ENCODE measurements at regions of chr11 and their contacts with region 1.

Region 1: DNA sequence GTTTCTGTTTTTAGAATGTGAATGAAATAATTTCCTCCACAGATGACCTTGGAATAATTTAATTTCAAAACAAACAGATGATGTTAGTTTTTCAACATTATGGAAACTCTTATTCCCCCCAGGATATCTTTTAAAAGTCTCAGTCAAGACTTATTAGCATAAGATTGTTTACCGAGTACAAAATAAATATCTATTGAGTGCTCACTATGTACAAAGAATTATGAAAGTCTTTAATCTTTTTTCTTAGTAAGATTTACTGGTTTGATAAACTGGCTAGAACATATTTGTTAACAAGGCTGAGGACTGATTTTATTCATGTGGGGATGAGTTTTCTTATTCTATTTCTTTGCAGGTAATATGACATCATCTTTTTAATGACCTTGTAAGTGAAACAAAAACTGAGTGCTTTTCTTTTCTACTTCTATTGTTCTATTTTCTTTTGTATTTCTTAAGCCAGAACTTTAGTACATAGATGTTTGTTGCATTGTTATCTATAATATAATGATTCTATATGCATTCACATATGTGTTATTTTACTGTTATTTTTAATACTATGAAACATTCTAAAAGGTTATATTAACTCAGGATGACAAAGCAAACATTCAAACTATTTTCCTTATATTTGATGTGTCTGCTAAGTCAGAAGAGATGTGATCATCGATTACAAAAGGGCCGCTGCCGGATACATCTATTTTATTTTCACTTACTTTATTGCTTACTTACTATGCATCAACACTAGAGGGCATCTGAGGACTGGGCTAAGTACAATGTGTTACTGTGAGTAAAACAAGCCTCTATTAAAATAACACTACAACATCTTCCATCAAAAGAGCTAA is 111.0 kb upstream of the ARHGAP42 start:
- DNase-seq: peak; percentile 12
- H3K4me3 Mint-ChIP-seq: no peak overlapping the region
- H3K27ac Mint-ChIP-seq: no peak overlapping the region
- H3K4me1 Mint-ChIP-seq: no peaks in the 10 kb centered on the region
- H3K27me3 Mint-ChIP-seq: no peaks in the 10 kb centered on the region

Region 2: GRCh38 chr11:100546714-100547113 is 29.4 kb before region 1 on chr11:
- CTCF ChIA-PET with region 1: no interaction called
- intact Hi-C with region 1: no loop called
- DNase-seq: no peak
- H3K4me3 Mint-ChIP-seq: no peak overlapping the region
- H3K27ac Mint-ChIP-seq: no peak overlapping the region
- H3K4me1 Mint-ChIP-seq: no peaks in the 10 kb centered on the region
- H3K27me3 Mint-ChIP-seq: no peaks in the 10 kb centered on the region

Region 3: GRCh38 chr11:100727410-100727809 is 151.3 kb after region 1 on chr11:
- CTCF ChIA-PET with region 1: no interaction called
- intact Hi-C with region 1: no loop called
- DNase-seq: no peak
- H3K4me3 Mint-ChIP-seq: no peak overlapping the region
- H3K27ac Mint-ChIP-seq: no peak overlapping the region
- H3K4me1 Mint-ChIP-seq: no peaks in the 10 kb centered on the region
- H3K27me3 Mint-ChIP-seq: peaks cover 3% of the 10 kb centered on the region

Region 4: DNA sequence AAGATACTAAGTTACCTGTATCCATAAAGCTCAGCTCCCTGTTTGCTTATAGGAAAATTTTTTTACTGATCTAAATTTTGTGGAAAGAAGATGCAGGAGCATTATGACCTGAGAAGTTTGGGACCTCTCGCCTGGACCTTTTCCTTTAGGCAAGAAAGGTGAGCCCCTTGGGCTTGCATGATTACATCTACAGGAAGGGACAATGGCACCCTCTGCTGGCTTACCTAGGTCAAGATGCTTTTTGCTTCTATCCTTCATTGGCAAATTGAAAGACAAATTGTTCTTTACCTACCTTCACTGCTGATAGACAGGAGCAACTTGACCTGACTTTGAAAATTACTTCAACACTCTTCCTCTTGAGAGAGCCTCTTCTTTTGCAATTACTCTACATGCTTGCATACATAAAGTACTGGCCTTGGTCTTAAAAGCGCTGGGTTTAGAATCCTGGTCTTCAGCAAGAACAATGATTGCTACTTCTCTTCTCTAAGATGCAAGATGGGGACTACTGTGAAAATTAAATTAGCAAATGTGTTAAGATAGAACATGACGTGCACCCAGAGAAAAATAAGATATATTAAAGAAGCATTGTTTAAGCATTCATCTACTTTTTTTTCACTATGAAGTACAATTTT is 860.5 kb after region 1 on chr11:
- CTCF ChIA-PET with region 1: no interaction called
- intact Hi-C with region 1: loop called (anchors 5 kb)
- DNase-seq: peak; percentile 31
- H3K4me3 Mint-ChIP-seq: no peak overlapping the region
- H3K27ac Mint-ChIP-seq: no peak overlapping the region
- H3K4me1 Mint-ChIP-seq: no peaks in the 10 kb centered on the region
- H3K27me3 Mint-ChIP-seq: no peaks in the 10 kb centered on the region

Region 5: GRCh38 chr11:101848262-101848661 is 1272.2 kb after region 1 on chr11:
- CTCF ChIA-PET with region 1: no interaction called
- intact Hi-C with region 1: loop called (anchors 2 kb)
- DNase-seq: no peak
- H3K4me3 Mint-ChIP-seq: no peak overlapping the region
- H3K27ac Mint-ChIP-seq: no peak overlapping the region
- H3K4me1 Mint-ChIP-seq: no peaks in the 10 kb centered on the region
- H3K27me3 Mint-ChIP-seq: peaks cover 8% of the 10 kb centered on the region

Measured in activated naive CD4-positive, alpha-beta T cell treated with anti-CD3 and anti-CD28 coated beads for 36 hours (primary cell).